ENCODE measurements at regions of chr7 and their contacts with region 1.

Region 1: DNA sequence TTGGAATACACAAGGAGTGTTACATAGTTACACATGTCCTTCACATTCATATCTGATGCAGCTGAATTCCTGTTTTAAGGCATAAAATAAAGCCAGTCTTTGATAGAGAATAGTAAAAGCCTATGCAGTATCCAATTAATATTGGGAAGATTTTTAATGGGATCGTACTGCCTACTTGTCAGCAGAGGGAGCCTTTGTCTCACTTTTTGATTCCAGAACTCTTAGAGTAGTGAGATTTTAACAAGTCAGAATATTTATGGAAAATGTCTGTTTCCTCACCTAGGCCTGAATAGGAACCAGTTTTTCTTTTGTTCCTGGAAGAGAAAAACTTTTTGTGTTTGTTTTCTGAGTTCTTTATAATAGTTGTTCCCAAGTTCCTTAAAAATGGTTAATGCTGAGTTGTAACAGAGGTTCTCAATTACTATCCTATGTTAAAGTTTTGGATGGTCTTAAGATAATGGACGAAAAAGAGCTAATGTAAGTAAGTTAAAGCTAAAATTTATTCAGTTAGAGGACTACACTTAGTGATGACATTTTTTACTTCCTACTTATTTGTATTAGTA is 114.0 kb downstream of the BBS9 start:
- DNase-seq: peak; percentile 48
- ATAC-seq: peak; percentile 73
- H3K4me3 ChIP-seq: no peak overlapping the region
- H3K27ac ChIP-seq: no peak overlapping the region
- H3K4me1 ChIP-seq: peaks cover 22% of the 10 kb centered on the region
- H3K27me3 ChIP-seq: no peaks in the 10 kb centered on the region
- CTCF ChIP-seq: peak; percentile 65
- EP300 ChIP-seq: no peak
- POLR2A ChIP-seq: no peak
- RAD21 ChIP-seq: peak; percentile 56

Region 2: DNA sequence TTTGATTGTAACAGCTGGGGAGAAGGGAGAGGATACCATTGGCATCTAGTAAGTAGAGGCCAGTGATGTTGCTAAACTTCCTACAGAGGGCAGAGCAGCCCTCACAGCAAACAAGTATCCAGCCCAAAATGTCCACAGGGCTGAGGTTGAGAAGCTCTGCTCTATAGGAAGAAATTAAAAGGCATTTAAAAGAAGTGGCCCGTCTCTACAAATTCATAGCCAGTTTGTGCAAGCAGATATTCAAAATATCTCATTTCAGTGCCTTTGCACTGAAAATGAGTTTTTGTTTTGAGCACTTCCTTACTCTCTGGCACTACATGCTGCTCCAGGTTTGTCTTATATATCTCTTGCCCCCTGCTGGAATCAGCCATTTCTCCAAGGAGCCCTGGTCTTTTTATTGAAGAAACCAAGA is 215.9 kb after region 1 on chr7:
- CTCF ChIA-PET with region 1: interaction called, 3 read pairs
- POLR2A ChIA-PET with region 1: no interaction called
- in situ Hi-C with region 1: no loop called
- intact Hi-C with region 1: loop called (anchors 10 kb)
- DNase-seq: peak; percentile 41
- ATAC-seq: peak; percentile 99
- H3K4me3 ChIP-seq: no peak overlapping the region
- H3K27ac ChIP-seq: no peak overlapping the region
- H3K4me1 ChIP-seq: peaks cover 10% of the 10 kb centered on the region; the same call in 1 of the 2 replicates
- H3K27me3 ChIP-seq: no peaks in the 10 kb centered on the region
- CTCF ChIP-seq: peak; percentile 52
- EP300 ChIP-seq: no peak
- POLR2A ChIP-seq: no peak
- RAD21 ChIP-seq: no peak

Region 3: DNA sequence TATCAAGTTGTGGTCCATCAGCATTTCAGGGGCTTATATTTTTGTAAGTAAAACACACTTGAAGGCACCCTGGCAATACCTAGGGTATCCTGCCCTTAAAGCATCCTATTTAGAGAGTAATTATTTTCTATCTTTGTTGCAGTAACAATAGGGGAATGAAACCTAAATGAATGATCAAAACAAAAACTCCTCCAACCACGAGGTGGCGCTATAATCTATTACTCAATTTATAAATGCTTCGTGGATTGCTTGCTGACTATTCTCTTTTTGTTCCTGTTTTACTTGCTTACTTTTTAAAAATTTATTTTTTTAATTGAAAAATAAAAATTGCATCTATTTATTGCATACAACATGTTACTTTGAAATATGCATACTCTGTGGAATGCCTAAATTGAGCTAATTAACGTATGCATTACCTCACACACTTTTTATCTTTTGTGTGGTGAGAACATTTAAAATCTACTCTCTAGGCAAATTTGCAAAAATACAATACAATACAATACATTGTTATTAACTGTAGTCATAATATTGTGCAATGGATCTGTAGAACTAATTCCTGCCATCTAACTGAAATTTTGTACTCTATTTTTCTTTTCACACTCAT is 514.3 kb after region 1 on chr7:
- CTCF ChIA-PET with region 1: no interaction called
- POLR2A ChIA-PET with region 1: no interaction called
- in situ Hi-C with region 1: no loop called
- intact Hi-C with region 1: loop called (anchors 5 kb)
- DNase-seq: peak; percentile 16
- ATAC-seq: no peak
- H3K4me3 ChIP-seq: no peak overlapping the region
- H3K27ac ChIP-seq: no peak overlapping the region
- H3K4me1 ChIP-seq: no peaks in the 10 kb centered on the region
- H3K27me3 ChIP-seq: no peaks in the 10 kb centered on the region
- CTCF ChIP-seq: peak; percentile 50
- EP300 ChIP-seq: no peak
- POLR2A ChIP-seq: no peak
- RAD21 ChIP-seq: no peak

Region 4: GRCh38 chr7:33932832-33933468 is 689.5 kb after region 1 on chr7:
- CTCF ChIA-PET with region 1: interaction called, 12 read pairs
- POLR2A ChIA-PET with region 1: no interaction called
- in situ Hi-C with region 1: loop called (anchors 10 kb)
- intact Hi-C with region 1: loop called (anchors 1 kb)
- DNase-seq: peak; percentile 35
- ATAC-seq: peak; percentile 82
- H3K4me3 ChIP-seq: no peak overlapping the region
- H3K27ac ChIP-seq: no peak overlapping the region
- H3K4me1 ChIP-seq: no peaks in the 10 kb centered on the region
- H3K27me3 ChIP-seq: peaks cover 0 to 13% of the 10 kb centered on the region in 2 experiments; a peak in 1 of 5 replicates
- CTCF ChIP-seq: peak; percentile 88
- EP300 ChIP-seq: no peak
- POLR2A ChIP-seq: no peak
- RAD21 ChIP-seq: peak; percentile 68